Ovary (tissue), 10 donors: ENCODE measurements at regions of chr5 and their contacts with region 1.

Region 1: GRCh38 chr5:82158755-82159413 is 119.3 kb downstream of the RPS23 start:
- DNase-seq: no peak
- H3K4me3 ChIP-seq: no peak overlapping the region
- H3K27ac ChIP-seq: no peak overlapping the region
- H3K4me1 ChIP-seq: peaks cover 2% of the 10 kb centered on the region
- H3K27me3 ChIP-seq: no peaks in the 10 kb centered on the region
- CTCF ChIP-seq: no peak
- EP300 ChIP-seq: no peak
- POLR2A ChIP-seq: no peak

Region 2: DNA sequence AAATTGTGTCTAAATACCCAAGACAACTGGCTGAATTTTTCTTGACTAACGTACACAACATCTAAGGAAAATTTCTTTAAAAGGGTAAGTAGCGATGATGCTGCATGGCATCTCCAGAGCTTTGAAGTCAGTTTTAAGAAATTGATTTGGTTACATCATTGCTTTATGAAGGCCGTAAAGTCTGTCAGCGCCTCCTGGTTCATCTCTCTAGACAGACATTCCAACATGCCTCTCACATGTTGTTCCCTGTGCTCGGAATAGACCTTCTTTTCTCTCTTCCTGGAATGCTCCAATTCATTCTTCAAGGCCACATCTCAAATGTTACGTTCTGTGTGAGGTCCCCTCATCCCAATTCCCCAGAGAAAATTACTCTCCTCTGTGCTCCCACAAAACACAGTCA is 299.3 kb before region 1 on chr5:
- intact Hi-C with region 1: loop called in 2 of 4 experiments (anchors 10 kb)
- DNase-seq: no peak
- H3K4me3 ChIP-seq: no peak overlapping the region
- H3K27ac ChIP-seq: no peak overlapping the region
- H3K4me1 ChIP-seq: peaks cover 5% of the 10 kb centered on the region
- H3K27me3 ChIP-seq: no peaks in the 10 kb centered on the region
- CTCF ChIP-seq: no peak
- EP300 ChIP-seq: no peak
- POLR2A ChIP-seq: no peak

Region 3: DNA sequence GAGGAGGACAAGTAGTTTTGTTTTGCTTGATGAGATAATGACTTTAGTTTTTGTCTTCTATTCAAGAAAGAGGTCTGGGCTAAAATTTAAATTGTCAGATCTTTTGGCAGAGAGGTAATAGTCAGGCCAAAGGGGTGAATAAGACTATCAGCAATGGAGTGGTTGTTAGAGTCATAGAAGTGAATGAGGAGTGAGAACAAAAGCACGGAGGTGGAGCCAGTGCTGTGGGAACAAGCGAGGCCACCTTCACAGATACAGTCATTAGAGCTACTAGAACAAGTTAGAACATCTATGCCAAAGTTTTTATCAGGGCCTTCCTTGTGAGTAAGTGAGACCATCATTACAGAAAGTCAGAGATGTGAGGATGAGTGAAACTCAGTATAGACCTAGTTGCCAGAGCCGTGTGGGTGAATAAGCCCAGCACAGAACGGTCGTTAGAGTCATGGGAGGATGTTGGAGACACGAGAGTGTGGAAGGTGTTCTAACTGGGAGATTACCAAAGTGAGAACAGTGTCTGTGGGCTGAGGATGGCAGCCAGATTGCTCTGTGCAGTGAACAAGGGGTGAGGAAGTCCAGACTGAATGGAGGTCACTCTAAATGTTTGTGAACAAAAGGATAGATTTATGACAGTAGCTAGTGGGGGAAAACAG is 15.8 kb before region 1 on chr5:
- intact Hi-C with region 1: no loop called
- DNase-seq: no peak
- H3K4me3 ChIP-seq: no peak overlapping the region
- H3K27ac ChIP-seq: no peak overlapping the region
- H3K4me1 ChIP-seq: no peaks in the 10 kb centered on the region
- H3K27me3 ChIP-seq: no peaks in the 10 kb centered on the region
- CTCF ChIP-seq: no peak
- EP300 ChIP-seq: no peak
- POLR2A ChIP-seq: no peak

Region 4: GRCh38 chr5:82183828-82184227 is 24.9 kb after region 1 on chr5:
- intact Hi-C with region 1: no loop called
- DNase-seq: no peak
- H3K4me3 ChIP-seq: no peak overlapping the region
- H3K27ac ChIP-seq: no peak overlapping the region
- H3K4me1 ChIP-seq: no peaks in the 10 kb centered on the region
- H3K27me3 ChIP-seq: no peaks in the 10 kb centered on the region
- CTCF ChIP-seq: no peak
- EP300 ChIP-seq: no peak
- POLR2A ChIP-seq: no peak

Region 5: DNA sequence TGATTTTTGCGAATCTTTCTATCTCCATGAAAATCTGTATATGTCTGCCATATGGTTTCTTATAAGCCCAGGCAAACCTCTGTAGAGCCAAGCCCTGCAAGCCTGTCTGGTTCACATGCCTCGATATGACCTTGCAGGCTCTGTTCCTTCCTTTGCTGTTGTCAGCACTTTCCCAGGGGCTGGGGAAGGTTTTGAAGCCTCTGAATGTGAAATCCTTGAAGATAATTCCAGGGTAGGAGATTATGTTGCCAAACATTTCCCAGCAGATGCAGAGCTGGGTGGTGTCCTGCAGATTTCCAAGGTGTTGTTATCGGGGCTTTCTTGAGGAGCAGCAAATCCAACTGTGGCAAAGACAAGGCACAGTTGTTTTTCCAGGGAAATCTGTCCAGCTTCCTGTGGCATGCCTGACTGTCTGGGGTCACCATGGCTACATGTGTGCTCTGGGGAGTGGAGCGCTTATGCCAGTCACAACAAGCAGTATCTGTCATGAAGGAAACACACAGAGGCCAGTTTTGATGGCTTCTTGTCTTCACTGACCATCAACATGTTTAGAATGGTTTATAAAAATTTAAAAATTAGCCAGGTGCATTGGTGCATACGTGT is 180.0 kb after region 1 on chr5:
- intact Hi-C with region 1: no loop called
- DNase-seq: no peak
- H3K4me3 ChIP-seq: no peak overlapping the region
- H3K27ac ChIP-seq: no peak overlapping the region
- H3K4me1 ChIP-seq: peaks cover 3% of the 10 kb centered on the region
- H3K27me3 ChIP-seq: no peaks in the 10 kb centered on the region
- CTCF ChIP-seq: no peak
- EP300 ChIP-seq: no peak
- POLR2A ChIP-seq: no peak